ENCODE measurements at regions of chr20 and their contacts with region 1.

Region 1: GRCh38 chr20:1392823-1393506 is at the start of gene FKBP1A:
- DNase-seq: peak; percentile 92
- H3K4me3 Mint-ChIP-seq: peak within 1 kb of the TSS; percentile 91
- H3K27ac Mint-ChIP-seq: peak within 1 kb of the TSS; percentile 88
- H3K4me1 Mint-ChIP-seq: peaks cover 54% of the 10 kb centered on the region
- H3K27me3 Mint-ChIP-seq: no peaks in the 10 kb centered on the region
- total RNA-seq, gene FKBP1A: 232 to 237 TPM

Region 2: DNA sequence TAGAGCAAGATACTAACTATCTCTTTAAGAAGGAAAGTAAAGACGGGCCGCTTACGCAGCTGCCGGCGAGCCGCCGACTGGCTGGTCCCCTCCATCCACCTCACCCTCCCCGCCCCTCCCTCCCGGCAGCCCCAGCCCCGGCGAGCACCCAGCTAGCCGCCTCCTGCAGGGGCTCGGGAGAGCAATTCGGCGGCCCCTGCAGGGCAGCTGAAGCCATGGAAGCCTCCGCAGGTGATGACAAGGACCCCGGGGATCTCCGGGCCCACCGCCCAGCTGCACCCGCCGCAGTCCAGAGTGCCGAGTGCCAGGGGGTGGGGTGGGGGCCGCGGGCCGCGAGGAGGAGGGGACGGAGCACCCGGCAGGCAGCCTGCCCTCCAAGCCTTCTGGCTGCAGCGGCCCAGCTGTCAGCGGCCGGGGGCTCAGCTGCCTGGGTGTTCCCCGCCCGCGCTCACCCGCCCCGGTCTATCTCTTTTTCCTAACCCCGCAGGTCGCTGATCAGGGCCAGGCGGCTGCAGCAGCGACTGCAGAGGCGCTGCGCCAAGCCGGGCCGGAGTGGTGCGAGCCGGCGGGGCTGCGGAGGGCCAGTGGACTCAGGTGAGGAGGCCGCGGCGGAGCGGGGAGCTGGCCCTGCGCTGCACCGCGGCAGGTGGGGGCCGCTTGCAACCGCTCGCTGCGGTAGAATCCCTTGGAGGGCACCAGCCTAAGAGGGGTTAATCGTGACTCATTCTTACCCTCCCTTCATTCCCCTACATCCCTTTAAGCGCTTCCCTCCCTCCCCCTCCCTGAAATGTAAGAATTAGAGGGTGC is 126.6 kb before region 1 on chr20 and contains the start of gene SNPH:
- CTCF ChIA-PET with region 1: no interaction called
- intact Hi-C with region 1: loop called (anchors 2 kb)
- DNase-seq: peak; percentile 85
- H3K4me3 Mint-ChIP-seq: peak within 1 kb of the TSS; percentile 90
- H3K27ac Mint-ChIP-seq: peak within 1 kb of the TSS; percentile 85
- H3K4me1 Mint-ChIP-seq: peaks cover 53% of the 10 kb centered on the region
- H3K27me3 Mint-ChIP-seq: no peaks in the 10 kb centered on the region
- total RNA-seq, gene SNPH: 6.7 to 7.3 TPM

Region 3: GRCh38 chr20:1357921-1358671 is 34.9 kb before region 1 on chr20:
- CTCF ChIA-PET with region 1: interaction called, 3 read pairs
- intact Hi-C with region 1: loop called (anchors 2 kb)
- DNase-seq: peak; percentile 60
- H3K4me3 Mint-ChIP-seq: peak overlapping the region; percentile 31
- H3K27ac Mint-ChIP-seq: peak overlapping the region; percentile 77
- H3K4me1 Mint-ChIP-seq: peaks cover 54% of the 10 kb centered on the region
- H3K27me3 Mint-ChIP-seq: no peaks in the 10 kb centered on the region

Region 4: GRCh38 chr20:1437235-1437904 is 44.4 kb after region 1 on chr20:
- CTCF ChIA-PET with region 1: interaction called, 8 read pairs
- intact Hi-C with region 1: loop called (anchors 1 kb)
- DNase-seq: peak; percentile 91
- H3K4me3 Mint-ChIP-seq: no peak overlapping the region
- H3K27ac Mint-ChIP-seq: no peak overlapping the region
- H3K4me1 Mint-ChIP-seq: peaks cover 30% of the 10 kb centered on the region
- H3K27me3 Mint-ChIP-seq: no peaks in the 10 kb centered on the region